Activated CD4-positive, alpha-beta T cell treated with anti-CD3 and anti-CD28 coated beads for 36 hours (primary cell): ENCODE measurements at regions of chr10 and their contacts with region 1.

Region 1: GRCh38 chr10:6498771-6499170 is 81.3 kb downstream of the PRKCQ start:
- DNase-seq: peak; percentile 47
- ATAC-seq: peak; percentile 79
- H3K4me3 Mint-ChIP-seq: peak overlapping the region; percentile 46
- H3K27ac Mint-ChIP-seq: peak overlapping the region; percentile 89
- H3K4me1 Mint-ChIP-seq: peaks cover 52% of the 10 kb centered on the region
- H3K27me3 Mint-ChIP-seq: no peaks in the 10 kb centered on the region

Region 2: GRCh38 chr10:6514844-6515780 is 16.3 kb after region 1 on chr10:
- CTCF ChIA-PET with region 1: interaction called, 3 read pairs
- POLR2A ChIA-PET with region 1: interaction called, 3 read pairs
- intact Hi-C with region 1: loop called in 1 of 2 experiments (anchors 2 kb)
- DNase-seq: no peak
- ATAC-seq: no peak
- H3K4me3 Mint-ChIP-seq: no peak overlapping the region
- H3K27ac Mint-ChIP-seq: no peak overlapping the region
- H3K4me1 Mint-ChIP-seq: peaks cover 88% of the 10 kb centered on the region
- H3K27me3 Mint-ChIP-seq: no peaks in the 10 kb centered on the region

Region 3: GRCh38 chr10:6877722-6878392 is 379.1 kb after region 1 on chr10:
- CTCF ChIA-PET with region 1: no interaction called
- POLR2A ChIA-PET with region 1: no interaction called
- intact Hi-C with region 1: no loop called
- DNase-seq: no peak
- ATAC-seq: no peak
- H3K4me3 Mint-ChIP-seq: no peak overlapping the region
- H3K27ac Mint-ChIP-seq: no peak overlapping the region
- H3K4me1 Mint-ChIP-seq: no peaks in the 10 kb centered on the region
- H3K27me3 Mint-ChIP-seq: peaks cover 13% of the 10 kb centered on the region

Region 4: DNA sequence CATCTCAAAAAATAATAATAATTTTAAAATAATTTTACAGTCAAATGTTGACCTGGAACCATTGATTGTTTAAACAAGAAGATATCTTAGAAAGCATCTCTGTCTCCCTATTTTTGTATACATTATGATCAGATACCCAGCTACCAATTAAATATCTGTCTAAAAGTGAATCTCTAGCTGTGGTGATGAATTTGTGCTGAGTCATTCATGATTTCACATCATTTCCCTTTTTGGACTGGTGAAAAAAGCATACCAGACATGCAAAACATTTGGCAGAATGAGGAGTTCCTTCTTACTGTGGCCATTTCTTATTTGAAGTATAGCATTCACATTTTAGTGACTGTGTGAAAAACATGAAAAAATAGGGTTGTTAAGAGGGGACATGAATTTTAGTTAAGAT is 1457.7 kb after region 1 on chr10:
- CTCF ChIA-PET with region 1: no interaction called
- POLR2A ChIA-PET with region 1: no interaction called
- intact Hi-C with region 1: no loop called
- DNase-seq: no peak
- ATAC-seq: peak; percentile 68
- H3K4me3 Mint-ChIP-seq: no peak overlapping the region
- H3K27ac Mint-ChIP-seq: no peak overlapping the region
- H3K4me1 Mint-ChIP-seq: peaks cover 12% of the 10 kb centered on the region
- H3K27me3 Mint-ChIP-seq: no peaks in the 10 kb centered on the region